ENCODE measurements at regions of chr10 and their contacts with region 1.

Region 1: DNA sequence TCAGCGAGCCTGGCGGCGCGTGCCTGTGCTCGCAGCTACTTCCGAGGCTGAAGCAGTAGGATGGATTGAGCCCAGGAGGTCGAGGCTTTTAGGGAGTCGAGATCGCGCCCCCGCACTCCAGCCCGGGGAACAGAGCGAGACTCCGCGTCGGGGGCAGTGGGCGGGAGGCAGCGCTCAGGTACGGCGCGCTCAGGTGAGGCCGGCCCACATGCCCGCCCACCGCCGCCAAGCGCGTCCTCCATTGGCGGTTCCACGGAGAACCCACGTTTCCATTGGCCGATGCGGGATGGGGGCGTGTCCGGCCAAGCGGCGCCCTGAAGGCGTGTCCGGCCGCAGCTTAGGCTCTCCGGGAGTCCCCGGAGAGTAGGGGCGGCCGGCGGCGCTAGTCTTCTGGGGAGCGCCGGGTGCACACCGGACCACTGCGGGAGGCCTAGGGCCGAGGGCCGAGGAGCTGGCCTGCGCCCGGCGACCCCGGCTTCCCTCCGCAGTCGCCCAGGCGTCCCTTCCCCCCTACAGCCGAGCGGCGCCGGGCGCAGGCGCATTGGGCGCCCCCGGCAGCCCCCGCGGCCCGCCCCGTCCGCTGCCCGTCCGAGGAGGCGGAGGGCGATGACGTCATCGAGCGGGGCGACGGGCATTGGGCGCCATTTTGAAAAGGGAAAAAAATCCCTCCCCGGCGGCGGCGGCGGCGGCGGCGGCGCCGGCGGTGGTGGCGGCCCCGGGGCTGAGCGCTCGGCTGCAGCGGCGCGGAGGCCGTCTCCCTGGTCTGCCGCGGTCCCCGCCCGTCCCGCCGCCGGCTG is at the start of gene PPP2R2D:
- DNase-seq: peak; percentile 89 to 98 (median 95)
- ATAC-seq: peak; percentile 81
- H3K4me3 ChIP-seq: peak within 1 kb of the TSS; percentile 73
- H3K4me3 Mint-ChIP-seq: peak within 1 kb of the TSS; percentile 97
- H3K27ac ChIP-seq: peak within 1 kb of the TSS; percentile 66 to 82
- H3K27ac Mint-ChIP-seq: peak within 1 kb of the TSS; percentile 96
- H3K4me1 ChIP-seq: peaks cover 65% of the 10 kb centered on the region
- H3K4me1 Mint-ChIP-seq: peaks cover 61% of the 10 kb centered on the region
- H3K27me3 ChIP-seq: no peaks in the 10 kb centered on the region
- H3K27me3 Mint-ChIP-seq: no peaks in the 10 kb centered on the region
- CTCF ChIP-seq: no peak
- total RNA-seq, gene PPP2R2D: 32.6 to 32.9 TPM

Region 2: GRCh38 chr10:131981429-131982184 is 81.1 kb after region 1 on chr10 and contains the start of gene BNIP3:
- CTCF ChIA-PET with region 1: no interaction called
- POLR2A ChIA-PET with region 1: interaction called, 10 read pairs
- intact Hi-C with region 1: loop called in 1 of 2 experiments (anchors 1 kb)
- DNase-seq: peak; percentile 87 to 98 (median 94)
- ATAC-seq: peak; percentile 87
- H3K4me3 ChIP-seq: peak within 1 kb of the TSS; percentile 80
- H3K4me3 Mint-ChIP-seq: peak within 1 kb of the TSS; percentile 90
- H3K27ac ChIP-seq: peak within 1 kb of the TSS; percentile 16 to 55
- H3K27ac Mint-ChIP-seq: peak within 1 kb of the TSS; percentile 81
- H3K4me1 ChIP-seq: peaks cover 53% of the 10 kb centered on the region
- H3K4me1 Mint-ChIP-seq: peaks cover 47% of the 10 kb centered on the region
- H3K27me3 ChIP-seq: no peaks in the 10 kb centered on the region
- H3K27me3 Mint-ChIP-seq: no peaks in the 10 kb centered on the region
- CTCF ChIP-seq: no peak
- total RNA-seq, gene BNIP3: 21.0 to 23.6 TPM